ENCODE measurements at regions of chr12 and their contacts with region 1.

Region 1: GRCh38 chr12:72136792-72137191 is 135.4 kb upstream of the TRHDE start:
- DNase-seq: no peak
- ATAC-seq: no peak
- H3K4me3 ChIP-seq: no peak overlapping the region
- H3K27ac ChIP-seq: no peak overlapping the region
- H3K4me1 ChIP-seq: no peaks in the 10 kb centered on the region
- H3K27me3 ChIP-seq: no peaks in the 10 kb centered on the region
- CTCF ChIP-seq: no peak

Region 2: GRCh38 chr12:72110937-72111650 is 25.7 kb before region 1 on chr12:
- intact Hi-C with region 1: loop called in 1 of 10 experiments (anchors 1 kb)
- DNase-seq: no peak
- ATAC-seq: no peak
- H3K4me3 ChIP-seq: no peak overlapping the region
- H3K27ac ChIP-seq: no peak overlapping the region
- H3K4me1 ChIP-seq: no peaks in the 10 kb centered on the region
- H3K27me3 ChIP-seq: no peaks in the 10 kb centered on the region
- CTCF ChIP-seq: no peak

Measured in heart right ventricle (tissue), 16 donors.